ENCODE measurements at regions of chr12 and their contacts with region 1.

Region 1: DNA sequence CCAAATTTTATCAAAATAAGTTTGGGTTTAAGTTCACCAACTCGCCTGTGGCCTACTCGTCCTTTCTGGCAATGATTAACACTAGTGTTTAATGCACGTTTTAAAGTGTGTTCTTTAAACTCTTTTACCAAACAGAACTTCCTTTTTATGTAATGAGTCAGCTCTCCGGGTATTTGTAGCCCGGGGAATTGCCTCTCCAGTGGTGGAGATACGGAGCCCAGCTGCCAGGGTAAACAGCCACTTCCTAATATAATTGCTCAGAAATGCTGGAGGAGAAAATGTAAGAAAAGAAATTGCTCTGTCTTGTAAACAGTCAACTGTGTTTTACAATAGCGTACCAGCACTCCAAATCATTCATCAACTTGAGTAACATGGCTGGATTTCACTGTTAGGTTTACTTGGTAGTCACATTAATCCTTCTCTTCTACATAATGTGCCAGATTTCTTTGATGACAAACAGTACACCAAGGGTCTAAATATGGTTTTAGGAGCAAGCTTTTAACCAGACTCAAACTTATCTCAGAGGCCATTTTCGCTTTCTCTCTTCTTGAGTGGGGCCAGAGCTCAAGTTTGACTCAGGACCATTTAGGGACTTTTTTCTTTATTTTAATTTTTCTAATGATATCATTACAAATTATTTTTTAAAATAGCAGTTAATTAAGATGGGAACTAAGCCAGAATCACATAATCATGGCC is 101.2 kb upstream of the SLC38A2 start:
- DNase-seq: peak; percentile 83 to 85
- ATAC-seq: peak; percentile 88
- H3K4me3 ChIP-seq: peak overlapping the region in 1 of 2 donors; percentile 34
- H3K27ac ChIP-seq: peak overlapping the region; percentile 72 to 95
- H3K4me1 ChIP-seq: peaks cover 0 to 3% of the 10 kb centered on the region in 2 donors
- H3K27me3 ChIP-seq: no peaks in the 10 kb centered on the region

Region 2: DNA sequence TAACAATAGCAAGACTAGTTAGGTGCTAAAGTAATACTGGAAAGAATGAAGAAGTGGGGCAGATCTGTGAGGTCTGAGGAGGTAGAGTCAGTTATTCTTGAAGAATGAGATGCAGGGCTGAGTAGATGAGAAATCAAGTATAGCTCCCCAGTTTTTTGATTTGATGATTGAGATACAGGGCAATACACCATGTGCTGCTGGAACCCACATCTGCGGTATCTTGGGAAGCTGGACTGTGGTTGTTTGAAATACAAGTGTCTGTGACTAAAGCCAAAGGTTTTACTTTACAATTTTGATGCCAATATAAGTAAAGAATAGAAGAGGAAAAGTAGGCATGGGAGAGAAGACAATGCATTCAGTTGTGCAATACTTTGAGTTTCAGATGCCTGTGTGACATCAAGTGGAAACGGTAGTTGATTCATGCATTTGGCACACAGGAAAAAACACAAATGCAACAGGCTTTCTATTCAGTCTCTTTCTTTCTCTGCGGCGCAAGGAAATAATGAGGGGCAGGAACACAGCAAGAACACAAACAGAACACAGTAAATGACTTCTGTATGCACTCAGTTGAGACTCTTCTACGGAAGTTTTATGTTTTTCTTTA is 88.9 kb after region 1 on chr12:
- intact Hi-C with region 1: loop called in 1 of 2 experiments (anchors 5 kb)
- DNase-seq: no peak
- ATAC-seq: no peak
- H3K4me3 ChIP-seq: peak overlapping the region; percentile 20 to 34
- H3K27ac ChIP-seq: no peak overlapping the region
- H3K4me1 ChIP-seq: peaks cover 4 to 5% of the 10 kb centered on the region in 2 donors
- H3K27me3 ChIP-seq: no peaks in the 10 kb centered on the region

Region 3: DNA sequence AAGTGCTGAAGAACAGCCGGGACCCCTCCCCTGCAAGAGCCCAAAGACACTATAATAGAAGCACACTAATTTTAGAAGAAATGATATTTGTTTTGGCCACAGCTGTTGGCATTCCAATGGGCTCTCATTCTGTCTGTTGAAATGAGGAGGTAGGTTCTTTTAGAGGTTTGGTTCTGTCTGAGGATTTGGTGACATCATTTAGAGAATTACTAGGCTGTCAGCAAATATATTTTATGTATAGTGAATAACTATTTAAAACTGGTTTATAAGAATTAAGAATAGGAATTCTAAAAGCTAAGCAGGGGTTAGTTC is 99.5 kb after region 1 on chr12:
- intact Hi-C with region 1: loop called in 1 of 2 experiments (anchors 5 kb)
- DNase-seq: no peak
- ATAC-seq: peak; percentile 33
- H3K4me3 ChIP-seq: no peak overlapping the region
- H3K27ac ChIP-seq: no peak overlapping the region
- H3K4me1 ChIP-seq: peaks cover 0 to 11% of the 10 kb centered on the region in 2 donors
- H3K27me3 ChIP-seq: no peaks in the 10 kb centered on the region